ENCODE measurements at regions of chr4 and their contacts with region 1.

Region 1: DNA sequence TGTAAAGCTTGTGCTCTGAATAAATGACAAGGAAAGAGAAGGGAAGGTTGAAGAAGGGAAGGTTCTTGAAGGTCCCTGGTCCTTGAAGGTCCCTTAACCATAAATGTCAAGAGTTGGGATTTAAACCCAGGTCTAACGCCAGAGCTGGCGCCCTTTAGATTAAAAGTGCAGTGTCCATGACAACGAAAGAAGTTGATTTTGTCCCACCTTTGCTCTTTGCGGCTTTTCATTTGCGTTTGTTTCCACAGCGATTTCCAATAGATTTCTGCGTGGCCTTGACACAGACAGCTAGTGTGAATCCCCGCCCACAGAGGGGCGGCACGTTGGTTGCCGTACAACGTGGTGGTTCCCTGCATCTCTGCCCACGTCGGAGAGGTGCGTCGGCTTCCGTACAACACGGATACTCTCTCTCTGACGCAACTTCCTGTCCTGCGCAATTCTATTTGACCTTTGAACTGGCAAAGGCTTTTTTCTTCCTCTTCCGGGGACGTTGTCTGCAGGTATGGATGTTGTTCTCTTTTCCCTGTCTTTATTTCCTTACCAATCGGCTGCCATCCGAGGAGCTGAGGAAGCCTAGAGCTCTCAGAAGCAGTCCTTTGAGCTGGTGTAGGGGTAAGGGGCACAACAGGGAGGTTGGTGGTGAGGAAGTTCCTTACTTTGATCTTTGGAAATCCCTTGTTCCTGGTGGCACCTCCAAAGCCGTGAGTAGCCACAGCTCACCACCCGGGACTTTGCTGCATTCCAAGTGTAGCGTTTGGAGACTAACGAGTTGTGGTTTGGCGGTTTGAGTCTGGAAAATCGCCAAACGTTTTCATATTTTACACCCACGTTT is at the start of gene RPL34:
- DNase-seq: peak; percentile 98
- H3K4me3 Mint-ChIP-seq: peak within 1 kb of the TSS; percentile 97
- H3K27ac Mint-ChIP-seq: peak within 1 kb of the TSS; percentile 99
- H3K4me1 Mint-ChIP-seq: peaks cover 32% of the 10 kb centered on the region
- H3K27me3 Mint-ChIP-seq: no peaks in the 10 kb centered on the region
- CTCF ChIP-seq: no peak
- total RNA-seq, gene RPL34: 1,508 and 1,646 TPM in 2 replicates

Region 2: GRCh38 chr4:108018040-108018883 is 602.1 kb before region 1 on chr4:
- CTCF ChIA-PET with region 1: interaction called, 3 read pairs
- POLR2A ChIA-PET with region 1: no interaction called
- intact Hi-C with region 1: loop called (anchors 5 kb)
- DNase-seq: peak; percentile 82
- H3K4me3 Mint-ChIP-seq: no peak overlapping the region
- H3K27ac Mint-ChIP-seq: peak overlapping the region; percentile 39
- H3K4me1 Mint-ChIP-seq: no peaks in the 10 kb centered on the region
- H3K27me3 Mint-ChIP-seq: no peaks in the 10 kb centered on the region
- CTCF ChIP-seq: peak; percentile 72

Region 3: GRCh38 chr4:108454227-108454626 is 166.1 kb before region 1 on chr4:
- CTCF ChIA-PET with region 1: no interaction called
- POLR2A ChIA-PET with region 1: no interaction called
- intact Hi-C with region 1: no loop called
- DNase-seq: no peak
- H3K4me3 Mint-ChIP-seq: no peak overlapping the region
- H3K27ac Mint-ChIP-seq: no peak overlapping the region
- H3K4me1 Mint-ChIP-seq: no peaks in the 10 kb centered on the region
- H3K27me3 Mint-ChIP-seq: no peaks in the 10 kb centered on the region
- CTCF ChIP-seq: no peak

Region 4: DNA sequence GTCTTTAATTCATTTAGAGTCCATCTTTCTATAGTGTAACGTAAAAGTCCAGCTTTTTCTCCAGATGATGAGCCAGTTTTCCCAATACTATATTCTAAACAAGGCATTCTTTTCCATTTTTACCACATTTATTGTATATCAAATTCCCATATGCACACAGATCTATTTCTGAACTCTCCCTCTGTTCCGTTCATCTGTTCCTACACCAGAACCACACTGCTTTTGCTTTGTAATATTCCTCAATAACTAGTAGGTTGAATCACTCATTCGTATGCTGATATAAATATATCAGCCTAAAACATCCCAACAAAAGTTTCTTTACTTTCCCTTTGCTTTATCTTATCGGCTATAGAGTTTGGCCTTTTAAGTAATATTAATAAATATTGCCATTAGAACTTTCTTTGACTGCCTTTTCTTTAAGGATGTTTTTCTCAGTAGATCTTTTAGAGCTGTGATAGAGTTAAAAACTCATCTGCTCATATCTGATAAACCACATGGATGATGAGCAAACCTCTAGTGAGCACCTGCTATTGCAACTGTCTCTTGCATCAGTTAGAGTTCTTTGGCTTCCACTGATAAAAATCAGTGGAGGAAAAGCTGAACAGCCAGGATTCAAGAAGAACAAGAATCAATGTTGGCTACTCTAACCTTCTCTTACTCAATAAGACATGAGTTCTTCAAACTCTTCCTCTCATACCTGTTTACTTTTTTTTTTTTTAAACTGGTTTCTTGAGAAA is 13.1 kb before region 1 on chr4:
- CTCF ChIA-PET with region 1: interaction called, 4 read pairs
- POLR2A ChIA-PET with region 1: interaction called, 13 read pairs
- intact Hi-C with region 1: no loop called
- DNase-seq: no peak
- H3K4me3 Mint-ChIP-seq: no peak overlapping the region
- H3K27ac Mint-ChIP-seq: no peak overlapping the region
- H3K4me1 Mint-ChIP-seq: no peaks in the 10 kb centered on the region
- H3K27me3 Mint-ChIP-seq: no peaks in the 10 kb centered on the region
- CTCF ChIP-seq: no peak

Region 5: GRCh38 chr4:108637856-108638255 is 17.5 kb after region 1 on chr4:
- CTCF ChIA-PET with region 1: no interaction called
- POLR2A ChIA-PET with region 1: interaction called, 17 read pairs
- intact Hi-C with region 1: no loop called
- DNase-seq: no peak
- H3K4me3 Mint-ChIP-seq: no peak overlapping the region
- H3K27ac Mint-ChIP-seq: no peak overlapping the region
- H3K4me1 Mint-ChIP-seq: peaks cover 28% of the 10 kb centered on the region
- H3K27me3 Mint-ChIP-seq: no peaks in the 10 kb centered on the region
- CTCF ChIP-seq: peak; percentile 24

Region 6: DNA sequence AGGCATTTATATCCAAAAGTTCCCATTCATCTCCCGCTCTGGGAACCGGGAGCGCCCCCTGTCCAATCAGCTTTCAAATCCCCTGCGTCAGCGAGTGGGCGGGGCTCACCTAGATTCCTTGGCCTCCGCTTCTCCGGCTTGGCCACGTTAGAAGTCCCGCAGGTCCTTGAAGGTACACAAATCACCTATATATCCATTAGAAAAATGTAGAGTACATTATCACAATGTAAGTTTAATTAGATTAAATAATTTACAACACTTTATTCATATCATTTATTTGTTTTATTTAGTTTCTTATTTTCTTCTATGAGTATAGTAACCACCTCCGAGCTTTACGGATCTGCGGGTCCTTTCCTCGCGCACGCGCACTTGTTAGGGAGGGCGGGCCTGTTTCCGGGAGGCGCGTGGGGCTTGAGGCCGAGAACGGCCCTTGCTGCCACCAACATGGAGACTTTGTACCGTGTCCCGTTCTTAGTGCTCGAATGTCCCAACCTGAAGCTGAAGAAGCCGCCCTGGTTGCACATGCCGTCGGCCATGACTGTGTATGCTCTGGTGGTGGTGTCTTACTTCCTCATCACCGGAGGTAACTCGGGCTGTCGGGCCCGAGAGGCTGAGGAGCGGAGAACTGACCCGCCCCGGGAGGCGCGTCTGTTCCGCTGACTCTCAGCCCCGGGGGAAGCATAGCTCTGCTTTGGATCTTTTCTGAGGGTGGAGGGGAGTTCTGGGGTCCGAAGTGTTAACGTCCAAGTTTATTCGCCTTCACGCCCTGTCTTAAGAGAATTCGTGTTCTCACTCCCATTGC is 30.1 kb after region 1 on chr4 and contains the start of gene OSTC:
- CTCF ChIA-PET with region 1: interaction called, 4 read pairs
- POLR2A ChIA-PET with region 1: interaction called, 65 read pairs
- intact Hi-C with region 1: loop called (anchors 2 kb)
- DNase-seq: peak; percentile 98
- H3K4me3 Mint-ChIP-seq: peak within 1 kb of the TSS; percentile 84
- H3K27ac Mint-ChIP-seq: peak within 1 kb of the TSS; percentile 80
- H3K4me1 Mint-ChIP-seq: peaks cover 23% of the 10 kb centered on the region
- H3K27me3 Mint-ChIP-seq: no peaks in the 10 kb centered on the region
- CTCF ChIP-seq: peak; percentile 11
- total RNA-seq, gene OSTC: 175 and 214 TPM in 2 replicates

Region 7: DNA sequence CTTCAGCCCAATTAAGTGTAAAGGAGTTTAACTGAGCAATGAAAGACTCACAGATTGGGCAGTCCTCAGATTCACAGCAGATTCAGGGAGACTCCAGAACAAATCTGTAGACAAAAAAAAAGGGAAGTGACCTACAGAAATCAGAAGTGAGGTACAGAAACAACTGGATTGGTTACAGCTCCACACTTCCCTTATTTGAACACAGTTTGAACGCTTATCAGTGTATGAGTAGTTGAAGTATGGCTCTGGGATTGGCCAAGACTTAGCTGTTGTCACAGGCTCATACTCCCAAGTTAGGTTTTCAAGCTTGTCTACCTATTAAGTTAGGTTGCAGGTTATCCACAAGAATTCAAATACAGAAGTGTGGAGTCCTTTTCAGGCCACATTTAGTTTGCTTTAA is 1690.5 kb after region 1 on chr4:
- CTCF ChIA-PET with region 1: no interaction called
- POLR2A ChIA-PET with region 1: no interaction called
- intact Hi-C with region 1: no loop called
- DNase-seq: no peak
- H3K4me3 Mint-ChIP-seq: no peak overlapping the region
- H3K27ac Mint-ChIP-seq: no peak overlapping the region
- H3K4me1 Mint-ChIP-seq: no peaks in the 10 kb centered on the region
- H3K27me3 Mint-ChIP-seq: no peaks in the 10 kb centered on the region
- CTCF ChIP-seq: no peak